ENCODE measurements at regions of chr11 and their contacts with region 1.

Region 1: DNA sequence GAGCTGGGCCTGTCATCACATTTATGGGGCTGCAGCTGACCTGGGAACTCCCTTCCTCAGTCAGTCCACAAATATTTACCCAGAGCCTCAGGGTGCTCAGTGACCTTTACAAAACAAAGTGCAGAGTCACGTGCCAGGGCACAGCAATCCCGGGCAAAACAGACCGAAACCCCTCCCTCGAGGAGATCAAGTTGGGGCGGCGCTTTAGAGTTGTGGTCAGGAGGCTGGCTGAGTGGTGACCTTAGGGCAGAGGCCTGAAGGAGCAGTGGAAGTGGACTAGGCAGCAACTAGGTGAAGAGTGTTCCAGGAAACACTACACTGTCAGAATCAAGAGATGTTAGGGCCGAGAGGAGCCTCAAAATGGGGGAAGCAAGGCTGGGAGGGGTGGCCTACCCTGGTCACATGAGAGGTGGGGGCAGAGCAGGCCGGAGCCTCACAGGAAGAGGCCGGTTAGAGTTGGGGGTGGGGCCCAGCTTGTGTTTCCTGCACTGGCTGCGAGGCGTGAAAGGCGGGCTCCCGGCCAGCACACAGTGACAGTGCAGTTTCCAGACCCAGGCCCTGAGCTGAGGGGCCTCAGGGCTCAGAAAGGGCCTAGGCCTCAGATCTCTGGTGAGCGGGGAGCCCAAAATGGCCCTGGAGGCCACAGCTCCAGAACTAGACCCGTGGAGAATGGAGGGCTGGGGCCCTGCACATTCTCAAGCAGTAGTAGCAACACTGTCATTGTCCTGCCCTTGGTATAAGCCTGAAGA is 3.7 kb upstream of the NEAT1 start:
- DNase-seq: peak; percentile 92
- H3K4me3 Mint-ChIP-seq: peak overlapping the region; percentile 91
- H3K27ac Mint-ChIP-seq: peak overlapping the region; percentile 97
- H3K4me1 Mint-ChIP-seq: peaks cover 55% of the 10 kb centered on the region
- H3K27me3 Mint-ChIP-seq: peaks cover 5% of the 10 kb centered on the region

Region 2: GRCh38 chr11:65382033-65382807 is 36.7 kb before region 1 on chr11 and contains the start of gene SLC25A45:
- CTCF ChIA-PET with region 1: interaction called, 15 read pairs
- POLR2A ChIA-PET with region 1: interaction called, 11 read pairs
- DNase-seq: peak; percentile 90
- H3K4me3 Mint-ChIP-seq: peak within 1 kb of the TSS; percentile 79
- H3K27ac Mint-ChIP-seq: peak within 1 kb of the TSS; percentile 98
- H3K4me1 Mint-ChIP-seq: peaks cover 56% of the 10 kb centered on the region
- H3K27me3 Mint-ChIP-seq: no peaks in the 10 kb centered on the region
- total RNA-seq, gene SLC25A45: 40.9 TPM

Region 3: DNA sequence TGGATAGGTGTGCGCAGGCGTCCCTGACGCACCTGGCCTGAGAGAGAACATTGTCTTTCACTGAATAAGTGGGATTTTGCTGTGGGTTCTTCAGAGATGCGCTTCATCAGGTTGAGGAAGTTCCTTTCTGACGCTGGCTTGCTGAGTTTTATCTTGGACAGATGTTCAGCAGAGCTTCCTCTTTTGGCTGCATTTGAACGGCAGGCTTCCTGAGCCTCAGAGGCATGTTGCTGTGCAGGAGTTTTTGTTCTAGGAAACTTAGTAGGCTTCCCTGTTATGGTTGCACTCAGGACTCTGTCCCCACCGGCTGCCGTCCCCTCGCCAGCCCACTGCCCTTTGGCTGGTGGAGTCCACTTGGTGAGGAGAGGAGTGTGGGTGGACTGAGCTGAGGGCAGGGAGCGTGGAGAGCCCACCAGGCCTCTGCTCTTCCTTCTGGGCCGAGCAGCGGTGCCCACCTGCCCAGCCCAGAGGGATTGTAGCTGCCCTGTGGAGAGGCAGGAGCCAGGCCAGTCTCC is 15.2 kb before region 1 on chr11:
- CTCF ChIA-PET with region 1: interaction called, 13 read pairs
- POLR2A ChIA-PET with region 1: no interaction called
- DNase-seq: no peak
- H3K4me3 Mint-ChIP-seq: no peak overlapping the region
- H3K27ac Mint-ChIP-seq: no peak overlapping the region
- H3K4me1 Mint-ChIP-seq: peaks cover 6% of the 10 kb centered on the region
- H3K27me3 Mint-ChIP-seq: no peaks in the 10 kb centered on the region

Region 4: DNA sequence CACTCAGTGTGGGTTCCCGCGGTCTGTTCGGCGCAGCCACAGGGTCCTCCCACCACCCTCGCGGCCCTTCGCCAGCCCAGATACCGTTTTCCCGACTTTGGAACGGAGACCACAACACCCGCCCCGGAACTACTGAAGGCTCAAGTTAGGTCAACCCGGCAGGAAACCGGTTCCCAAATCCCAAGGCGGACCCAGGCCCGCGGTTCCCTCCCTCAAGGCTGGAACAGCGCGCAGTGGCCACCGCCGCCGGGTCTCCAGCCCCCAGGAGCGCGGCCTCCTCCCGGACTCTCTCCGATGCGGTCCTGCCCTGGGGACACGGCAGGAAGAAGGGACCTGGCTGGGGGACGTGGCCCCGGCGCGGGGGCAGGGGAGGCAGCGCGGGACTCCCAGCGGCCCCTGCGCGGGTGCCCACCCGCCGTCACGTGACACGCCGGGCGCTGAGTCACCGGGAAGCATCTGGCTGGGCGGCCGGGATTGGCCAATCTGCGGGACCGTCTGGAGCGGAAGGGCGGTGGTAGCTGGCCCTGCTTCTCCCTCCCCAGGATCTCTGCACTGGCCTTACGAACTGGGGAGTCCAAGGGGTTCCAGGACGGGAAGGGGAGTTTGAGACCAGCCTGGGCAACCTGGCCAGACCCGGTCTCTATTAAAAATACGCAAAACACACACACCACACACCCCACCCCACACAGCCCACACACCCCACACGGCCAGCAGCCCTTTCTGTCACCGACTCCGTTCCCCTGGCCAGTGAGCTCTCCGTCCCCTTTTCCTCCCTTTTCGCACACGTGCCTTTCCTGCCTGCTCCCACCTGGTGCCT is 58.5 kb after region 1 on chr11:
- CTCF ChIA-PET with region 1: interaction called, 18 read pairs
- POLR2A ChIA-PET with region 1: interaction called, 16 read pairs
- DNase-seq: peak; percentile 88
- H3K4me3 Mint-ChIP-seq: peak overlapping the region; percentile 88
- H3K27ac Mint-ChIP-seq: peak overlapping the region; percentile 99
- H3K4me1 Mint-ChIP-seq: peaks cover 25% of the 10 kb centered on the region
- H3K27me3 Mint-ChIP-seq: peaks cover 4% of the 10 kb centered on the region

Region 5: GRCh38 chr11:65497141-65498041 is 78.5 kb after region 1 on chr11:
- CTCF ChIA-PET with region 1: interaction called, 67 read pairs
- POLR2A ChIA-PET with region 1: interaction called, 781 read pairs
- DNase-seq: peak; percentile 97
- H3K4me3 Mint-ChIP-seq: no peak overlapping the region
- H3K27ac Mint-ChIP-seq: no peak overlapping the region
- H3K4me1 Mint-ChIP-seq: peaks cover 36% of the 10 kb centered on the region
- H3K27me3 Mint-ChIP-seq: peaks cover 1% of the 10 kb centered on the region

Region 6: GRCh38 chr11:65726660-65727059 is 307.8 kb after region 1 on chr11:
- CTCF ChIA-PET with region 1: no interaction called
- POLR2A ChIA-PET with region 1: no interaction called
- DNase-seq: no peak
- H3K4me3 Mint-ChIP-seq: no peak overlapping the region
- H3K27ac Mint-ChIP-seq: no peak overlapping the region
- H3K4me1 Mint-ChIP-seq: peaks cover 4% of the 10 kb centered on the region
- H3K27me3 Mint-ChIP-seq: peaks cover 5% of the 10 kb centered on the region

Measured in activated CD4-positive, alpha-beta T cell treated with anti-CD3 and anti-CD28 coated beads, Interleukin-2, amount 10 ng/mL, durations not matched to agents 7 days and 5 days (primary cell).